CD8-positive, alpha-beta T cell (primary cell): ENCODE measurements at regions of chr11 and their contacts with region 1.

Region 1: GRCh38 chr11:66386171-66387069 is 14.9 kb upstream of the SLC29A2 start:
- DNase-seq: peak; percentile 67 to 90 (median 83)
- ATAC-seq: peak; percentile 75
- H3K4me3 ChIP-seq: no peak overlapping the region
- H3K4me3 Mint-ChIP-seq: peak overlapping the region; percentile 18
- H3K27ac ChIP-seq: no peak overlapping the region
- H3K27ac Mint-ChIP-seq: no peak overlapping the region
- H3K4me1 ChIP-seq: peaks cover 5% of the 10 kb centered on the region
- H3K4me1 Mint-ChIP-seq: peaks cover 8% of the 10 kb centered on the region
- H3K27me3 ChIP-seq: no peaks in the 10 kb centered on the region
- H3K27me3 Mint-ChIP-seq: no peaks in the 10 kb centered on the region
- CTCF ChIP-seq: peak; percentile 77

Region 2: GRCh38 chr11:66328307-66329144 is 57.9 kb before region 1 on chr11:
- CTCF ChIA-PET with region 1: interaction called, 23 read pairs
- POLR2A ChIA-PET with region 1: no interaction called
- intact Hi-C with region 1: loop called (anchors 1 to 5 kb)
- DNase-seq: peak; percentile 65 to 92 (median 81)
- ATAC-seq: peak; percentile 83
- H3K4me3 ChIP-seq: peak overlapping the region; percentile 12
- H3K4me3 Mint-ChIP-seq: peak overlapping the region; percentile 67
- H3K27ac ChIP-seq: peak overlapping the region in 1 of 2 experiments; percentile 57
- H3K27ac Mint-ChIP-seq: peak overlapping the region; percentile 89
- H3K4me1 ChIP-seq: peaks cover 45% of the 10 kb centered on the region
- H3K4me1 Mint-ChIP-seq: peaks cover 39% of the 10 kb centered on the region
- H3K27me3 ChIP-seq: no peaks in the 10 kb centered on the region
- H3K27me3 Mint-ChIP-seq: no peaks in the 10 kb centered on the region
- CTCF ChIP-seq: peak; percentile 92

Region 3: DNA sequence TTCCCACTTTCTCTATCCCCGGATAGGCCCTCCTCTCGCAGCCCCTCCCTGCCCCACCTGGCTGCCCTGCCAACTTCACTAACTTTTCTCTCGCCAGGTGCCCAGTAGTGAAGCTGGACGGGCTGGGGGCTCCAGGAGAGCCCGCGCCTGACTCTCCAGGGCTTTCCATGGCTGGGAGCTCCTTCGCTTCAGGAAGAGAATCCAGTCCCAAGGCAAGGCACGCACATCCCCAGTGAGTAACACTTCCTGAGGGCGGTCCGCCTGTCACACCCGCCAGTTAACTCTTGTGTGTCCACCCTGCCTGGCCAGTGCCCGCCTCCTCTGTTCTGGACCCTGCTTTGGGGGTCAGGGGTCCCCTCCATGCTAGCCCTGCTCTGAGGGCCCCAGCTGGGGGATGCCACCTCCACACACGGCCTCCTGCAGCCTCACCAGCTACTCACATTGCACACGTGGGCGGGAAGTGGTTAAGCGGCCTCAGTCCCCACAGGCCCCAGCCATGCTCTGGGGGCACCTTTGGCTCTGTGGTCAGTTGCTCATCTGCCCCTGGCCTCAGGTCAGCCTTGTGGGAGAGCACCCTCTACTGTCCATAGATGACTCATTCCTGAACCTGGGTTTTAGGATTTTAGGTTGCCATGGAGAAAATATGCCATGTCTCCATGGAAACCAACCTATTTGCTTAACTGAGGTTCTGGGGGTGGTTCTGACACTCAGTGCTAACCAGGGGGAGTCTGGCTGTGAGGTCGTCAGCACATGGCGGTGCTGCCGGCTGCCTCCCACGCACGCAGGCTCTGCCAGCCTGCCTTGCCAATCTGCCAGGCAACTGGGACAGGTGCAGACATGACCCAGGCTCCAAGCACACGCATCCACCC is 50.0 kb before region 1 on chr11 and contains the start of gene RIN1:
- CTCF ChIA-PET with region 1: interaction called, 23 read pairs
- POLR2A ChIA-PET with region 1: no interaction called
- intact Hi-C with region 1: no loop called
- DNase-seq: peak in 5 of 9 experiments; percentile 47 to 86 (median 76)
- ATAC-seq: peak; percentile 83
- H3K4me3 ChIP-seq: peak within 1 kb of the TSS; percentile 52 to 77
- H3K4me3 Mint-ChIP-seq: peak within 1 kb of the TSS; percentile 87
- H3K27ac ChIP-seq: peak within 1 kb of the TSS; percentile 26 to 75
- H3K27ac Mint-ChIP-seq: peak within 1 kb of the TSS; percentile 75
- H3K4me1 ChIP-seq: peaks cover 26% of the 10 kb centered on the region
- H3K4me1 Mint-ChIP-seq: peaks cover 22% of the 10 kb centered on the region
- H3K27me3 ChIP-seq: no peaks in the 10 kb centered on the region
- H3K27me3 Mint-ChIP-seq: no peaks in the 10 kb centered on the region
- CTCF ChIP-seq: no peak
- total RNA-seq, gene RIN1: 1.5 to 3.2 TPM

Region 4: DNA sequence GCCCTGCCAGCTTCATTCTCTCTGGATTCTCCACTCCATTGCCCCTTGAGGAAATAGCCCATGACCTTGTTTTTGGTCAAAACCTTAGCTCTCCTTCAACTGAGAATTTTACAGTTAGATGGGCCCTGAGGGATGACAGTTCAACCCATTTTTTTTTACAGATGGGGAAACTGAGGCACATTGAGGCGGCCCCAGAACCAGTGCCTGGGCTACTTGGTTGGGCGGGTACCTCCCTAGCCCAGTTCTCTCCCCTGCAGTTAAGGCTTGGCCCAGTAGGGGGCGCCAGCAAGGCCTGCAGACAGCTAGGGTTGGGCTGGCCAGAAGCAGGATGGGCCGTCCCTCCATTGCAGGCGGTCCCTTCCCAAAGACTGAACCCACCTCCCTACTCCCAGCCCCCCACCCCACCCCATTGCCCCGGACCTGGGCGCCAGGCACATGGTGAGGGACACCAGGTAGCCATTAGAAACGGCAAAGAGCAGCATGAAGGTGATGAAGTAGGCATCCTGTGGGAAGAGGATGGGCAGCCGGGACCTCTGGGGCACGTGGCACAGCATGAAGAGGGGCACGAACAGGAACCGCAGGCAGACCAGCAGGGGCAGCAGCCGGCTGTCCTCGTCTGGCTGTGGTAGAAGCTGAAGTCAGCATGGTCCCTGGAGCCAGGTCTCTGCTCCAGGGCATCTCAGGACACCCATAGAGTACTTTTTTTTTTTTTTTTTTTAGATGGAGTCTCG is 22.4 kb before region 1 on chr11:
- CTCF ChIA-PET with region 1: interaction called, 26 read pairs
- POLR2A ChIA-PET with region 1: no interaction called
- intact Hi-C with region 1: loop called in 1 of 2 experiments (anchors 1 kb)
- DNase-seq: peak; percentile 42 to 78 (median 65)
- ATAC-seq: peak; percentile 83
- H3K4me3 ChIP-seq: no peak overlapping the region
- H3K4me3 Mint-ChIP-seq: no peak overlapping the region
- H3K27ac ChIP-seq: no peak overlapping the region
- H3K27ac Mint-ChIP-seq: no peak overlapping the region
- H3K4me1 ChIP-seq: no peaks in the 10 kb centered on the region
- H3K4me1 Mint-ChIP-seq: no peaks in the 10 kb centered on the region
- H3K27me3 ChIP-seq: no peaks in the 10 kb centered on the region
- H3K27me3 Mint-ChIP-seq: no peaks in the 10 kb centered on the region
- CTCF ChIP-seq: peak; percentile 76

Region 5: DNA sequence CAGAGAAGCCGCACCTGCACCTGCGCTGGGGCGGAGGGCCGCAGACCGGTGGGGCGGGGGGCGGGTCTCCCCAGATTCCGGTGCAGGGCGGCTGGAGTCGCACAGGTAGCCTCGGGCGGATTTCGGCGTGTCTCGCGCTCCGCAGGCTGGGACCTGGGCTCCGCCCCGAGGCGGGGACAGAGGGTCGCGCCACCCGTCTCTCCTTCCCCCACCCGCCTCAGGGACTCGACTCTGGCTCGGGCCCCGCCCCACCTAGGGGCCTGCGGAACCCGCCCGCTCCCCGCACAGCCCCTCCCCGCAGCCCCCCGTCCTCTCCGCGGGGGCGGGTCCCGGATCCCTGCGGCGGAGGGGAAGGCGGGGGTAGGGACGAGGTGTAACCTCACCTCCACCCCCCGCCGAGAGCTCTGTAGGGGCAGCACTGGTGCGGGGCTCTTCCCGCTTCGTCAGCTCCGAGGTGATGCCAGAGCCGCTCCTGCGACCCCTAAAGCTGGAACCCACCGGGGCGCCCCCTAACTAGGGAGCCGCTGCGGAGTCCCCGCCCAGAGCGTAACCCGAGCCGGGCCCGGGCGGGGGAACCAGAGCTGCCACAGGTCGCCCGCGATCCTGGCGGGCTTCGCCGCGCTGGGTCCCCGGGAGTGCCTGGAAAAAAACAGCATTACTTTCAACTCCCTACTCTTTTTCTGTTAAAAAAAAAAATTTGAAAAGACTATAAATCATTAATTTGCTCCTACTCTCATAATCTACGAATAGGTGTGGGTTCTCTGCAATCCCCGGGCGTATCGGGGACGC is 14.6 kb before region 1 on chr11 and contains the start of gene SLC29A2:
- CTCF ChIA-PET with region 1: interaction called, 12 read pairs
- POLR2A ChIA-PET with region 1: interaction called, 14 read pairs
- intact Hi-C with region 1: loop called (anchors 1 to 2 kb)
- DNase-seq: peak; percentile 49 to 89 (median 80)
- ATAC-seq: peak; percentile 86
- H3K4me3 ChIP-seq: peak within 1 kb of the TSS; percentile 71 to 77
- H3K4me3 Mint-ChIP-seq: peak within 1 kb of the TSS; percentile 87
- H3K27ac ChIP-seq: peak within 1 kb of the TSS; percentile 63 to 68
- H3K27ac Mint-ChIP-seq: peak within 1 kb of the TSS; percentile 88
- H3K4me1 ChIP-seq: peaks cover 10% of the 10 kb centered on the region
- H3K4me1 Mint-ChIP-seq: peaks cover 12% of the 10 kb centered on the region
- H3K27me3 ChIP-seq: no peaks in the 10 kb centered on the region
- H3K27me3 Mint-ChIP-seq: no peaks in the 10 kb centered on the region
- CTCF ChIP-seq: no peak
- total RNA-seq, gene SLC29A2: 5.6 to 6.0 TPM

Region 6: GRCh38 chr11:66568124-66568916 is 181.9 kb after region 1 on chr11 and contains the start of gene CTSF:
- CTCF ChIA-PET with region 1: no interaction called
- POLR2A ChIA-PET with region 1: no interaction called
- intact Hi-C with region 1: no loop called
- DNase-seq: peak; percentile 35 to 85 (median 74)
- ATAC-seq: peak; percentile 95
- H3K4me3 ChIP-seq: peak within 1 kb of the TSS; percentile 46 to 74
- H3K4me3 Mint-ChIP-seq: peak within 1 kb of the TSS; percentile 82
- H3K27ac ChIP-seq: peak within 1 kb of the TSS in 1 of 2 experiments; percentile 17
- H3K27ac Mint-ChIP-seq: peak within 1 kb of the TSS; percentile 81
- H3K4me1 ChIP-seq: peaks cover 12% of the 10 kb centered on the region
- H3K4me1 Mint-ChIP-seq: peaks cover 10% of the 10 kb centered on the region
- H3K27me3 ChIP-seq: peaks cover 0 to 3% of the 10 kb centered on the region in 2 experiments
- H3K27me3 Mint-ChIP-seq: no peaks in the 10 kb centered on the region
- CTCF ChIP-seq: no peak
- total RNA-seq, gene CTSF: 13.1 to 14.1 TPM